ENCODE measurements at regions of chr2 and their contacts with region 1.

Region 1: DNA sequence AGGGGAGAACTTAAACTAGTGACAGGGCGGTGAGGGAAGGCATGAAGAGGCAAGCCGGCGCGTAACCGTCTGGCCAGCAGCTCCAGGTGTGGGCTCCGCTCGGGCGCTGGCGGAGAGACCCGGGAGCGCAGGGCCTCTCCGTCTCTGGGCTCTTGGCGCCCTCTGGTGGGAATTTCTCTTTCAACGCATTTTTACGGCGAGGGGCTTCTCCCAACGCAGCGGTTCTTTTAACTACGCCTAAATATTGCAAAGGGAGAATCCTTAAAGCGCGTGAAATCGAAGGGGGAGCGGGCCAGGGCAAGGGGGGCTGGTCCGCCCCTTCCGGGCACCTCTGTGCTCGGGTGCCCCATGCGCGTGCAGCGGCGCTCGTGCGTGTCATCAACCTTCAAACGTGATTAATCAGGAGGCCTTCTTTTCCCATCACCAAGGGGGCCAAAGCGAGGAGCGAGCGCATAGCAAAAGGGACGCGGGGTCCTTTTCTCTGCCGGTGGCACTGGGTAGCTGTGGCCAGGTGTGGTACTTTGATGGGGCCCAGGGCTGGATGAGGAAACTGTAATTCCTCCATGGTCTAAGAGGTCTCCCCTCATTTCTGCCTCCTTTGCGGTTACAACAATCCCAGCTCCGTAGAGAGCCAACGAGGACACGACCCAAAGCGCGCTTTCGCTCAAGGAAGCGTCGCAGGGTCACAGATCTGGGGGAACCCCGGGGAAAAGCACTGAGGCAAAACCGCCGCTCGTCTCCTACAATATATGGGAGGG is 762 bp upstream of the GAD1 start:
- DNase-seq: peak; percentile 72
- H3K4me3 Mint-ChIP-seq: peak overlapping the region; percentile 81
- H3K27ac Mint-ChIP-seq: no peak overlapping the region
- H3K4me1 Mint-ChIP-seq: peaks cover 6% of the 10 kb centered on the region
- H3K27me3 Mint-ChIP-seq: peaks cover 47% of the 10 kb centered on the region
- CTCF ChIP-seq: peak; percentile 87

Region 2: DNA sequence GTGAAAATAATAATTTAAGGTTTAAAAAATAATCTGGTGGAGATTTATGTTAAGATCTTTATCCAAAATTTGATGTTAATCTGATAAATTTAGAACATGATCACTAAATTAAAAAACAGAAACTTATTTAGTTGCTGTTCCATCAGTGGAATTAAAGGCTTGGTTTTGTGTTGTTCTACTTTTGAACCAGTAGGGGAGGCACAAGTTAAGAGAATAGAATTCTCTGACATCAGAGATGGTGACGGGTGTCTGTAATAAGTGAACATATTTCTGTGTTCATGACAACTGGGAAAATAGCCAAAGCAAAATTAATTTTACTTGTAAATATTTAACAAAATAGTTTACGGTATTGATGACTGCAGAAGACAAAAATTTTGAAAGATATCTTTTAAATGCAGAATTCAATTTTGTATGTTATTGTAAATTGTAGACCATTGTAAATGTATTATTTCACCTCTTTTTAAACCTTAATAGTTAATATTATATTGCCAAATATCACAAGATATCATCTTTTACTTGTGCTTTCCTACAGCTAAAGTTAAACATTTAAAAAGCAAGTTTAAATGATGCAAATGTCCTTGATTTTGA is 882.7 kb before region 1 on chr2:
- CTCF ChIA-PET with region 1: no interaction called
- POLR2A ChIA-PET with region 1: no interaction called
- intact Hi-C with region 1: loop called (anchors 10 kb)
- DNase-seq: peak; percentile 48
- H3K4me3 Mint-ChIP-seq: no peak overlapping the region
- H3K27ac Mint-ChIP-seq: no peak overlapping the region
- H3K4me1 Mint-ChIP-seq: no peaks in the 10 kb centered on the region
- H3K27me3 Mint-ChIP-seq: no peaks in the 10 kb centered on the region
- CTCF ChIP-seq: peak; percentile 52

Region 3: DNA sequence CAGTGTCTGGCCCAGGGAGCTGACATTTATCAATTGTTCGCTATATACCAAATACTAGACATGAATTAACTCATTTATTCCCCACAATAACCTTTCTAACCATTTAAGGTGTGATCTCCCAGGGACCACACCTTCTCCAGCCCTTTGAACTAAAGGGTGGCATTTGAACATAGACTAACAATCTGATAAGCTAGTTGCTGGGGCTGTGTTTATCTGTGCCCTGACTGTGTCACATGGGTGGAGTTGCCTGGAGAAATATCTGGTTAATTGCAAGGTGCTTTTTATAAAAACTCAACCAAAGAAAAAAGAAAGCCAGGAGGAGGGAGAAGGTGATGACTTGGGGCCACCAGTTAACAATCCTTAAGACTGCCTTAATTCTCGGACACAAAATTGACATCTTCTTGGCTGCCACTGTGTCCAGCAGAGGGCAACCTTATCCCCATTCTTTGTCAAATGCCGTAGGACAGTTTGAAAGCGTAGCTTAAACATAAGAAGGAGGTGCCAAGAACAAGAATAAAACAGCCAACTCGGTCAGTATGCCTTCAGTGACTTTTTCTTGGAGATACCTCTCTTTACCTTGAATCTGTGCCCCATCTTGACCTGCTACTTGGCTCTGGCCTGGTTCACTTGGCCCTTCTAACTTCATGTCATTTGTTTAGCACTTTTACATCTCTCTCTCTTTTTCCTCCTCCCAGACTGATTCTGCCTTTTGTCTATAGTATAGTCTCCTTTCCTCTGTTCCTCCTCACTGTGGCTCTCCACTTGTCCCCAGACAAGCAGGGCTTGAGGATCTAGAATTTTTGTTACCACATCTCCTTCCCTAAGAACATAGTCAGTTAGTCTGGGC is 454.6 kb before region 1 on chr2:
- CTCF ChIA-PET with region 1: interaction called, 99 read pairs
- POLR2A ChIA-PET with region 1: interaction called, 3 read pairs
- intact Hi-C with region 1: loop called (anchors 5 kb)
- DNase-seq: peak; percentile 77
- H3K4me3 Mint-ChIP-seq: no peak overlapping the region
- H3K27ac Mint-ChIP-seq: no peak overlapping the region
- H3K4me1 Mint-ChIP-seq: peaks cover 7% of the 10 kb centered on the region
- H3K27me3 Mint-ChIP-seq: peaks cover 58% of the 10 kb centered on the region
- CTCF ChIP-seq: peak; percentile 76

Region 4: GRCh38 chr2:170386554-170386953 is 429.4 kb before region 1 on chr2:
- CTCF ChIA-PET with region 1: interaction called, 88 read pairs
- POLR2A ChIA-PET with region 1: interaction called, 4 read pairs
- intact Hi-C with region 1: no loop called
- DNase-seq: no peak
- H3K4me3 Mint-ChIP-seq: no peak overlapping the region
- H3K27ac Mint-ChIP-seq: no peak overlapping the region
- H3K4me1 Mint-ChIP-seq: no peaks in the 10 kb centered on the region
- H3K27me3 Mint-ChIP-seq: peaks cover 11% of the 10 kb centered on the region
- CTCF ChIP-seq: no peak

Region 5: DNA sequence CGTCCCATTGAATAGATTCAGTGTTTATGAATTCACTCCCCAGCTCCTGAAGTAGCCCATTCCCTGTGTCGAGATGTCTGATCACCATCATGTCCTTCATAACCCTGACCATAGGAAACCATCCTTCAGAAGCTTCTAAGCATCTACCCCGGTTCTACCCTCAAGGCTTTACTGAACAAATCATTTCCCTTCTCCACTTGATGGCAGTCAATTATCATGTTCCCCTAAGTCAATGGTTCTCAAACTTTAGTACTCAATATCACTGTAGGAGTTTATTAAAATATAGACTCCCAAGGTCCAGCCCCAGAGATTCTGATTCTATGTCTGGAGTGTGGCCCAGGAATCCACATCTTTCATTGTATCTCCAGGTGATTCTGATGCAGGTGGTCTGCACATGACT is 329.2 kb before region 1 on chr2:
- CTCF ChIA-PET with region 1: interaction called, 10 read pairs
- POLR2A ChIA-PET with region 1: no interaction called
- intact Hi-C with region 1: loop called (anchors 1 kb)
- DNase-seq: peak; percentile 11
- H3K4me3 Mint-ChIP-seq: no peak overlapping the region
- H3K27ac Mint-ChIP-seq: no peak overlapping the region
- H3K4me1 Mint-ChIP-seq: no peaks in the 10 kb centered on the region
- H3K27me3 Mint-ChIP-seq: no peaks in the 10 kb centered on the region
- CTCF ChIP-seq: no peak

Region 6: GRCh38 chr2:170739048-170739447 is 76.9 kb before region 1 on chr2:
- CTCF ChIA-PET with region 1: interaction called, 16 read pairs
- POLR2A ChIA-PET with region 1: interaction called, 3 read pairs
- intact Hi-C with region 1: loop called (anchors 1 kb)
- DNase-seq: peak; percentile 80
- H3K4me3 Mint-ChIP-seq: peak overlapping the region; percentile 22
- H3K27ac Mint-ChIP-seq: peak overlapping the region; percentile 98
- H3K4me1 Mint-ChIP-seq: peaks cover 18% of the 10 kb centered on the region
- H3K27me3 Mint-ChIP-seq: no peaks in the 10 kb centered on the region
- CTCF ChIP-seq: no peak

Region 7: GRCh38 chr2:170761572-170761971 is 54.4 kb before region 1 on chr2:
- CTCF ChIA-PET with region 1: no interaction called
- POLR2A ChIA-PET with region 1: no interaction called
- intact Hi-C with region 1: no loop called
- DNase-seq: no peak
- H3K4me3 Mint-ChIP-seq: no peak overlapping the region
- H3K27ac Mint-ChIP-seq: no peak overlapping the region
- H3K4me1 Mint-ChIP-seq: no peaks in the 10 kb centered on the region
- H3K27me3 Mint-ChIP-seq: no peaks in the 10 kb centered on the region
- CTCF ChIP-seq: no peak

Region 8: DNA sequence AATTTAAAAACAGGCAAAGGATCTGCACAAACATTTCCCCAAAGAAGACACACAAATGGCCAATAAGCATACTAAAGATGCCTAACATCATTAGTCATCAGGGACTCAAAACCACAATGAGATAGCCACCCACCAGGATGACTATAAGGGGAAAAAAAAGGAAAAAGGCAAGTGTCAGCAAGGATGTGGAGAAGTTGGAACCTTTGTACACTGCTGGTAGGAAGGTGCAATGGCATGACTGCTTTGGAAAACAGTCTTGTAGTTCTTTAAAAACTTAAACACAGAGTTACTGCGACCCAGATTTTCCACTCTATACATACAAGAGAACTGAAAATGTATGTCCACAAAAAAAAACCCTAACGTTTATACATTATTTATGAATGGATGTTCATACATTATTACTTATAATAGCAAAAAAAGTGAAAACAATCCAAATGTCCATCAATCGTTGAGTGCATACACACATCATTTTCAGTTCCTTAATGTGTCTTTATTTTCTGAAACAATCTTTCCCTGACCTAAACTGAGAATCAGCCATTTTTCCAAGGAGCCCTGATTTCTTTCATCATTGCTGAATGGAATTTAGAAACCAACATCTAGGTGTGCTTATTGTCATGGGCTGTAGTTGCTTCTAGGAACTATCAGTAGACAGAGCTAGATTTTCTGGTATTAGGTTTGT is 409.5 kb after region 1 on chr2:
- CTCF ChIA-PET with region 1: no interaction called
- POLR2A ChIA-PET with region 1: no interaction called
- intact Hi-C with region 1: no loop called
- DNase-seq: peak; percentile 76
- H3K4me3 Mint-ChIP-seq: no peak overlapping the region
- H3K27ac Mint-ChIP-seq: peak overlapping the region; percentile 46
- H3K4me1 Mint-ChIP-seq: peaks cover 6% of the 10 kb centered on the region
- H3K27me3 Mint-ChIP-seq: no peaks in the 10 kb centered on the region
- CTCF ChIP-seq: no peak